T-cell (primary cell): ENCODE measurements at regions of chr14 and their contacts with region 1.

Region 1: GRCh38 chr14:42750769-42751316 is 1144.2 kb downstream of the LRFN5 start:
- DNase-seq: no peak
- ATAC-seq: no peak
- H3K4me3 ChIP-seq: no peak overlapping the region
- H3K4me3 Mint-ChIP-seq: no peak overlapping the region
- H3K27ac ChIP-seq: no peak overlapping the region
- H3K27ac Mint-ChIP-seq: no peak overlapping the region
- H3K4me1 ChIP-seq: no peaks in the 10 kb centered on the region
- H3K4me1 Mint-ChIP-seq: no peaks in the 10 kb centered on the region
- H3K27me3 ChIP-seq: no peaks in the 10 kb centered on the region
- H3K27me3 Mint-ChIP-seq: no peaks in the 10 kb centered on the region

Region 2: GRCh38 chr14:42734041-42734440 is 16.8 kb before region 1 on chr14:
- CTCF ChIA-PET with region 1: no interaction called
- POLR2A ChIA-PET with region 1: no interaction called
- DNase-seq: no peak
- ATAC-seq: no peak
- H3K4me3 ChIP-seq: no peak overlapping the region
- H3K4me3 Mint-ChIP-seq: no peak overlapping the region
- H3K27ac ChIP-seq: no peak overlapping the region
- H3K27ac Mint-ChIP-seq: no peak overlapping the region
- H3K4me1 ChIP-seq: no peaks in the 10 kb centered on the region
- H3K4me1 Mint-ChIP-seq: no peaks in the 10 kb centered on the region
- H3K27me3 ChIP-seq: no peaks in the 10 kb centered on the region
- H3K27me3 Mint-ChIP-seq: no peaks in the 10 kb centered on the region

Region 3: DNA sequence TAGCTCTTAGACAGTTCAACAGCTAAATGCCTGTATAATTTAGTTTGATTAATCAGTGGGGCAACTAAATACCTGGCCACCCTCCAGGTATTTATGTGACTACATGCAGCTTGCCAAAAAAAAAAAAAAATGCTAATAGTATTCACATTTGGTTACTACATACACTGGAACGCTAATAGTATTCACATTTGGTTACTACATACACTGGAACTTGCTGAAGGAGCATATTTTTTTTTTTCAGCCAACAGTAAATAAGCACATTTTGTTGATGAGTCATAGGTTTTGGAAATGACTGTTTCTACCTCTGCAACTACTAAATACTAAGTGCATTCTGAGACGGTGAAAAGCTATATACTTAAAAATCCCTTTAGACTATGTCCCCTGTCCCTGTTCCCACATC is 28.1 kb after region 1 on chr14:
- CTCF ChIA-PET with region 1: no interaction called
- POLR2A ChIA-PET with region 1: no interaction called
- DNase-seq: no peak
- ATAC-seq: no peak
- H3K4me3 ChIP-seq: no peak overlapping the region
- H3K4me3 Mint-ChIP-seq: no peak overlapping the region
- H3K27ac ChIP-seq: no peak overlapping the region
- H3K27ac Mint-ChIP-seq: no peak overlapping the region
- H3K4me1 ChIP-seq: no peaks in the 10 kb centered on the region
- H3K4me1 Mint-ChIP-seq: no peaks in the 10 kb centered on the region
- H3K27me3 ChIP-seq: no peaks in the 10 kb centered on the region
- H3K27me3 Mint-ChIP-seq: no peaks in the 10 kb centered on the region

Region 4: GRCh38 chr14:42860371-42860770 is 109.5 kb after region 1 on chr14:
- CTCF ChIA-PET with region 1: interaction called in 1 of 2 experiments, 11 read pairs
- POLR2A ChIA-PET with region 1: no interaction called
- DNase-seq: no peak
- ATAC-seq: no peak
- H3K4me3 ChIP-seq: no peak overlapping the region
- H3K4me3 Mint-ChIP-seq: no peak overlapping the region
- H3K27ac ChIP-seq: no peak overlapping the region
- H3K27ac Mint-ChIP-seq: no peak overlapping the region
- H3K4me1 ChIP-seq: no peaks in the 10 kb centered on the region
- H3K4me1 Mint-ChIP-seq: no peaks in the 10 kb centered on the region
- H3K27me3 ChIP-seq: no peaks in the 10 kb centered on the region
- H3K27me3 Mint-ChIP-seq: no peaks in the 10 kb centered on the region

Region 5: DNA sequence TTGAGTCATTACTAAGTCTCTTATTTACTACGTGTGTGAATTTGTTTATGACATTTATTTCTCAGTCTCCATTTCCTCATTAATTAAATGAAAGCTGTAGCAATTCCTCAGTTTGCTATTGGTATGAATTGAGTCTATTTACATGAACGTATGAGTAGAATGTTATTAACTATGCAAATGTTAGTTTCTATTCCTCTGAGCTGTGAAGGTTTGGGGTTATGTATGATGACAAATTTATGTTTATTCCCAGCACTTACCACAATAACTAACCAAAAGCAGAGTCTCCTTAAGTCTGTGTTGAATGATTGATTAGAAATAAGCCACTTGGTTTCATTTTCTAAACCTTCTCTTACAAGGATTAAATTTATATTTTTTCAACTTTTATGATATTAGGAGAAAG is 415.3 kb after region 1 on chr14:
- CTCF ChIA-PET with region 1: no interaction called
- POLR2A ChIA-PET with region 1: no interaction called
- DNase-seq: no peak
- ATAC-seq: no peak
- H3K4me3 ChIP-seq: no peak overlapping the region
- H3K4me3 Mint-ChIP-seq: no peak overlapping the region
- H3K27ac ChIP-seq: no peak overlapping the region
- H3K27ac Mint-ChIP-seq: no peak overlapping the region
- H3K4me1 ChIP-seq: no peaks in the 10 kb centered on the region
- H3K4me1 Mint-ChIP-seq: no peaks in the 10 kb centered on the region
- H3K27me3 ChIP-seq: no peaks in the 10 kb centered on the region
- H3K27me3 Mint-ChIP-seq: no peaks in the 10 kb centered on the region